K562 (cell line): ENCODE measurements at regions of chr1 and their contacts with region 1.

Region 1: DNA sequence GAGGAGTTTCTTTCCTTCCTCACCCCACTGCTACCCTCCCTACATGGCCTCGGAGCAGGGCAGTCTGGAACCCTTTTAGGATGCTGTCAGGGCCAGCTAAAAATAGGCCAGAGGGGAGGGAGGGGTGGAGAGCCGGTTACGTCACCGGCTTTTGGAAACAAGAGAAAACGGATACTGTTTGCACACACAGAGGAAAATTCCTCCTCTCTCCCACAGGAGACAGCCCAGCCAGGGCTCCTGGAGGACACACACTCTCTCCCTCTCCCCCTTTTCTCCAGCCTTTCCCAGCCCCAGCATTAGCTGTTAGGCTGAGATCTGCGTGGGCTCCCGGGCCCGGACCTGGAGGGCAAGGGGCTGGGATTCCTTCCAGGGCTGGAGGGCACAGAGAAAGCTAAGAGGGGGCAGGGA is 20.0 kb upstream of the ALDH4A1 start:
- DNase-seq: no peak
- ATAC-seq: peak; percentile 19
- H3K4me3 ChIP-seq: no peak overlapping the region
- H3K27ac ChIP-seq: no peak overlapping the region
- H3K4me1 ChIP-seq: peaks cover 11 to 15% of the 10 kb centered on the region in 2 experiments; a peak in 4 of 5 replicates
- H3K27me3 ChIP-seq: peaks cover 69 to 96% of the 10 kb centered on the region in 2 experiments
- CTCF ChIP-seq: no peak
- EP300 ChIP-seq: no peak
- POLR2A ChIP-seq: no peak
- RAD21 ChIP-seq: no peak

Region 2: GRCh38 chr1:19067182-19067911 is 145.0 kb after region 1 on chr1:
- CTCF ChIA-PET with region 1: no interaction called
- POLR2A ChIA-PET with region 1: no interaction called
- in situ Hi-C with region 1: no loop called
- intact Hi-C with region 1: loop called (anchors 5 kb)
- DNase-seq: no peak
- ATAC-seq: no peak
- H3K4me3 ChIP-seq: no peak overlapping the region
- H3K27ac ChIP-seq: no peak overlapping the region
- H3K4me1 ChIP-seq: peaks cover 0 to 29% of the 10 kb centered on the region in 2 experiments; a peak in 3 of 5 replicates
- H3K27me3 ChIP-seq: peaks cover 20 to 65% of the 10 kb centered on the region in 2 experiments; a peak in 4 of 5 replicates
- CTCF ChIP-seq: no peak
- EP300 ChIP-seq: no peak
- POLR2A ChIP-seq: no peak
- RAD21 ChIP-seq: no peak